Heart right ventricle (tissue), 16 donors: ENCODE measurements at regions of chr1 and their contacts with region 1.

Region 1: GRCh38 chr1:43763497-43763973 is 56.2 kb downstream of the ST3GAL3 start:
- DNase-seq: peak in 1 of 2 donors; percentile 80
- ATAC-seq: peak; percentile 88 to 96 (median 94)
- H3K4me3 ChIP-seq: no peak overlapping the region
- H3K27ac ChIP-seq: no peak overlapping the region
- H3K4me1 ChIP-seq: peaks cover 0 to 19% (median 10%) of the 10 kb centered on the region in 9 donors
- H3K27me3 ChIP-seq: no peaks in the 10 kb centered on the region
- CTCF ChIP-seq: peak; percentile 57 to 94 (median 84)

Region 2: GRCh38 chr1:43529206-43529731 is 234.3 kb before region 1 on chr1:
- intact Hi-C with region 1: loop called in 3 of 10 experiments (anchors 5 to 10 kb)
- DNase-seq: peak; percentile 80 to 82
- ATAC-seq: peak; percentile 41 to 85 (median 74)
- H3K4me3 ChIP-seq: no peak overlapping the region
- H3K27ac ChIP-seq: no peak overlapping the region
- H3K4me1 ChIP-seq: peaks cover 0 to 20% (median 11%) of the 10 kb centered on the region in 9 donors
- H3K27me3 ChIP-seq: peaks cover 0 to 38% (median 9%) of the 10 kb centered on the region in 7 donors
- CTCF ChIP-seq: peak; percentile 87 to 96 (median 94)

Region 3: GRCh38 chr1:43893006-43893405 is 129.5 kb after region 1 on chr1:
- intact Hi-C with region 1: loop called in 1 of 10 experiments (anchors 5 kb)
- DNase-seq: no peak
- ATAC-seq: peak in 4 of 8 donors; percentile 27 to 68 (median 32)
- H3K4me3 ChIP-seq: no peak overlapping the region
- H3K27ac ChIP-seq: no peak overlapping the region
- H3K4me1 ChIP-seq: peaks cover 0 to 17% (median 5%) of the 10 kb centered on the region in 9 donors
- H3K27me3 ChIP-seq: no peaks in the 10 kb centered on the region
- CTCF ChIP-seq: no peak

Region 4: GRCh38 chr1:43934101-43934985 is 170.8 kb after region 1 on chr1:
- intact Hi-C with region 1: loop called (anchors 1 to 5 kb)
- DNase-seq: peak; percentile 44 to 55
- ATAC-seq: peak in 7 of 8 donors; percentile 46 to 75 (median 62)
- H3K4me3 ChIP-seq: peak overlapping the region in 4 of 10 donors; percentile 36 to 44 (median 42)
- H3K27ac ChIP-seq: peak overlapping the region in 1 of 10 donors; percentile 9
- H3K4me1 ChIP-seq: peaks cover 6 to 40% (median 23%) of the 10 kb centered on the region in 9 donors
- H3K27me3 ChIP-seq: peaks cover 0 to 41% (median 26%) of the 10 kb centered on the region in 7 donors
- CTCF ChIP-seq: peak; percentile 72 to 87 (median 78)

Region 5: GRCh38 chr1:44029906-44030604 is 266.5 kb after region 1 on chr1:
- intact Hi-C with region 1: loop called in 3 of 10 experiments (anchors 5 to 10 kb)
- DNase-seq: peak; percentile 87 to 88
- ATAC-seq: peak; percentile 87 to 93 (median 90)
- H3K4me3 ChIP-seq: peak overlapping the region; percentile 68 to 97 (median 82)
- H3K27ac ChIP-seq: peak overlapping the region; percentile 26 to 89 (median 80)
- H3K4me1 ChIP-seq: peaks cover 6 to 40% (median 21%) of the 10 kb centered on the region in 9 donors
- H3K27me3 ChIP-seq: peaks cover 0 to 11% (median 0%) of the 10 kb centered on the region in 7 donors
- CTCF ChIP-seq: no peak

Region 6: GRCh38 chr1:44036409-44037139 is 273.0 kb after region 1 on chr1:
- intact Hi-C with region 1: loop called in 5 of 10 experiments (anchors 2 to 10 kb)
- DNase-seq: peak; percentile 44 to 60
- ATAC-seq: peak; percentile 53 to 76 (median 66)
- H3K4me3 ChIP-seq: no peak overlapping the region
- H3K27ac ChIP-seq: peak overlapping the region in 9 of 10 donors; percentile 3 to 74 (median 46)
- H3K4me1 ChIP-seq: peaks cover 6 to 38% (median 23%) of the 10 kb centered on the region in 9 donors
- H3K27me3 ChIP-seq: peaks cover 0 to 5% (median 0%) of the 10 kb centered on the region in 7 donors
- CTCF ChIP-seq: peak; percentile 50 to 88 (median 79)

Region 7: GRCh38 chr1:44049839-44050238 is 286.3 kb after region 1 on chr1:
- intact Hi-C with region 1: loop called in 3 of 10 experiments (anchors 5 to 10 kb)
- DNase-seq: no peak
- ATAC-seq: no peak
- H3K4me3 ChIP-seq: no peak overlapping the region
- H3K27ac ChIP-seq: peak overlapping the region in 1 of 10 donors; percentile 67
- H3K4me1 ChIP-seq: peaks cover 0 to 32% (median 0%) of the 10 kb centered on the region in 9 donors
- H3K27me3 ChIP-seq: no peaks in the 10 kb centered on the region
- CTCF ChIP-seq: no peak